Activated B cell treated with CpG ODN at 0.5 μM for 24 hours (primary cell): ENCODE measurements at regions of chr6 and their contacts with region 1.

Region 1: GRCh38 chr6:30556066-30556905 is at the start of gene GNL1:
- DNase-seq: peak; percentile 99
- ATAC-seq: peak; percentile 89
- H3K4me3 Mint-ChIP-seq: peak within 1 kb of the TSS; percentile 94
- H3K27ac Mint-ChIP-seq: peak within 1 kb of the TSS; percentile 97
- H3K4me1 Mint-ChIP-seq: peaks cover 40% of the 10 kb centered on the region
- H3K27me3 Mint-ChIP-seq: no peaks in the 10 kb centered on the region
- CTCF ChIP-seq: no peak
- total RNA-seq, gene GNL1: 67.2 and 67.4 TPM in 2 replicates

Region 2: DNA sequence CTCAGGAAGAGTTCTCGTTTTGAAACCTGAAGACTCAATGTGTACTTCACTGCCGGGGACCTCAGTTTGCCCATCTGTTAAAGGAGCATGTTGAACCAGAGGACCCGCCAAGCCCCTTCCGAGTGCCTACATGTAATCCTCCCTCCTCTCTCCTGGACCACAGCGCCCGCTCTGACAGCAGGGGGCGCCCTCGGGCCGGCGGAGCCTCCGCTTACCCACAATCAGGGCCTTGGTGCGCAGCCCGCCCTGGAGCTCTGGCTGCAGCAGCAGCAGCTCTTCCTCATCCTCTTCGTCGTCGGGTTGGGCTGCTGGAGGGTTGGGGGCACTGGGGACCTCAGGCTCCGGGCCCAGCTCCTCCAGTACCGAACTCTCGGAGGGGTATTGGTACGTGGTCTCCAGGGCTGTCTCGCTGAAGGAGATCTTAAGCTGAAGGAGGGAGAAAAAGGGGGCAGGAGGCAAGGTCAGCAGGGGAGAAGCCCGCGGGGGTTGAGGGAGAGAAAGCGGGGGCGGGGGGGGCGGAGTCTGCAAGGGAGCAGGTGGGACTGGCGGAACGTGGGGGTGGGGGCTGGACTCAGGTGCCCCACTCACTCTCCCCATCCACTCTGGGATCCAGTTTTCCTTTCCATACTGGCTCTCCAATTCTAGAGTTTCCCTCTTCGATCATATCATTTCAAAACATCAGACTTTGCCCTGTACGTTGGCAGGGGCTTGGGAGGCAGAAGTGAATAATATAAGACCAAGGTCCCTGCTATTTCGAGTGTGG is 122.9 kb after region 1 on chr6:
- CTCF ChIA-PET with region 1: interaction called, 4 read pairs
- POLR2A ChIA-PET with region 1: interaction called, 4 read pairs
- intact Hi-C with region 1: loop called (anchors 1 kb)
- DNase-seq: peak; percentile 94
- ATAC-seq: peak; percentile 33
- H3K4me3 Mint-ChIP-seq: peak overlapping the region; percentile 92
- H3K27ac Mint-ChIP-seq: peak overlapping the region; percentile 99
- H3K4me1 Mint-ChIP-seq: peaks cover 62% of the 10 kb centered on the region
- H3K27me3 Mint-ChIP-seq: no peaks in the 10 kb centered on the region
- CTCF ChIP-seq: peak; percentile 73